ENCODE measurements at regions of chr5 and their contacts with region 1.

Region 1: GRCh38 chr5:56838409-56839039 is 23.2 kb downstream of the MAP3K1 start:
- DNase-seq: peak in 2 of 5 donors; percentile 44 to 54
- H3K4me3 ChIP-seq: no peak overlapping the region
- H3K4me3 Mint-ChIP-seq: peak overlapping the region in 6 of 7 donors; percentile 8 to 46 (median 29)
- H3K27ac ChIP-seq: no peak overlapping the region
- H3K27ac Mint-ChIP-seq: peak overlapping the region; percentile 37 to 90 (median 73)
- H3K4me1 ChIP-seq: peaks cover 76% of the 10 kb centered on the region
- H3K4me1 Mint-ChIP-seq: peaks cover 76 to 92% (median 91%) of the 10 kb centered on the region in 3 donors
- H3K27me3 ChIP-seq: no peaks in the 10 kb centered on the region
- H3K27me3 Mint-ChIP-seq: no peaks in the 10 kb centered on the region

Region 2: GRCh38 chr5:55936100-55936693 is 902.3 kb before region 1 on chr5:
- CTCF ChIA-PET with region 1: interaction called, 25 read pairs
- POLR2A ChIA-PET with region 1: no interaction called
- DNase-seq: peak; percentile 59 to 82 (median 64)
- H3K4me3 ChIP-seq: no peak overlapping the region
- H3K4me3 Mint-ChIP-seq: no peak overlapping the region
- H3K27ac ChIP-seq: no peak overlapping the region
- H3K27ac Mint-ChIP-seq: peak overlapping the region in 1 of 8 donors; percentile 27
- H3K4me1 ChIP-seq: no peaks in the 10 kb centered on the region
- H3K4me1 Mint-ChIP-seq: no peaks in the 10 kb centered on the region
- H3K27me3 ChIP-seq: no peaks in the 10 kb centered on the region
- H3K27me3 Mint-ChIP-seq: peaks cover 0 to 2% of the 10 kb centered on the region in 2 donors

Region 3: GRCh38 chr5:56264417-56265025 is 574.0 kb before region 1 on chr5:
- CTCF ChIA-PET with region 1: interaction called, 15 read pairs
- POLR2A ChIA-PET with region 1: no interaction called
- DNase-seq: peak in 1 of 5 donors; percentile 17
- H3K4me3 ChIP-seq: no peak overlapping the region
- H3K4me3 Mint-ChIP-seq: no peak overlapping the region
- H3K27ac ChIP-seq: no peak overlapping the region
- H3K27ac Mint-ChIP-seq: no peak overlapping the region
- H3K4me1 ChIP-seq: no peaks in the 10 kb centered on the region
- H3K4me1 Mint-ChIP-seq: peaks cover 0 to 2% (median 0%) of the 10 kb centered on the region in 3 donors
- H3K27me3 ChIP-seq: no peaks in the 10 kb centered on the region
- H3K27me3 Mint-ChIP-seq: peaks cover 3 to 8% of the 10 kb centered on the region in 2 donors

Region 4: GRCh38 chr5:56270568-56271392 is 567.7 kb before region 1 on chr5:
- CTCF ChIA-PET with region 1: interaction called, 23 read pairs
- POLR2A ChIA-PET with region 1: no interaction called
- DNase-seq: peak; percentile 39 to 65 (median 56)
- H3K4me3 ChIP-seq: no peak overlapping the region
- H3K4me3 Mint-ChIP-seq: peak overlapping the region in 4 of 7 donors; percentile 14 to 70 (median 16)
- H3K27ac ChIP-seq: no peak overlapping the region
- H3K27ac Mint-ChIP-seq: peak overlapping the region in 3 of 8 donors; percentile 32 to 64 (median 35)
- H3K4me1 ChIP-seq: peaks cover 8% of the 10 kb centered on the region
- H3K4me1 Mint-ChIP-seq: peaks cover 8 to 15% (median 9%) of the 10 kb centered on the region in 3 donors
- H3K27me3 ChIP-seq: no peaks in the 10 kb centered on the region
- H3K27me3 Mint-ChIP-seq: peaks cover 0 to 10% of the 10 kb centered on the region in 2 donors

Region 5: DNA sequence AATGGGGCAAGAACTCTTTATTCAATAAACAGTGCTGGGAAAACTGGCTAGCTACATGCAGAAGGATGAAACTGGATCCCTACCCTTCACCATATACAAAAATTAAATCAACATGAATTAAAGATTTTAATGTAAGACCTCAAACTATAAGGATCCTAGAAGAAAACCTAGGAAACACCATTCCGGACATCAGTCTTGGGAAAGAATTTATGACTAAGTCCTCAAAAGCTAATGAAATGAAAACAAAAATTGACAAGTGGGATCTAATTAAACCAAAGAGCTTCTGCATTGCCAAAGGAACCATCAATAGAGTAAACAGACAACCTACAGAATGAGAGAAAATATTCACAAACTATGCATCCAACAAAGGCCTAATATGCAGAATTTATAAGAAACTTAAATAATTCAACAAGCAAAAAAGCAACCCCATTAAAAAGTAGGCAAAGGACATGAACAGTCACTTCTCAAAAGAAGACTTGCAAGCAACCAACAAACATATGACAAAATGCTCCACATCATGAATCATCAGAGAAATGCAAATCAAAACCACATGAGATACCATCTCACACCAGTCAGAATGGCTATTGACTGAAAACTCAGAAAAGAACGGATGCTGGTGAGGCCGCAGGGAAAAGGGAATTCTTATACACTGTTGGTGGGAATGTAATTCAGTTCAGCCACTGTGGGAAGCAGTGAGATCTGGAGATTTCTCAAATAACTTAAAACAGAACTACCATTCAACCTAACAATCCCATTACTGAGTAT is 127.5 kb before region 1 on chr5:
- CTCF ChIA-PET with region 1: no interaction called
- POLR2A ChIA-PET with region 1: no interaction called
- DNase-seq: no peak
- H3K4me3 ChIP-seq: no peak overlapping the region
- H3K4me3 Mint-ChIP-seq: no peak overlapping the region
- H3K27ac ChIP-seq: no peak overlapping the region
- H3K27ac Mint-ChIP-seq: peak overlapping the region in 1 of 8 donors; percentile 27
- H3K4me1 ChIP-seq: no peaks in the 10 kb centered on the region
- H3K4me1 Mint-ChIP-seq: peaks cover 4 to 14% (median 5%) of the 10 kb centered on the region in 3 donors
- H3K27me3 ChIP-seq: no peaks in the 10 kb centered on the region
- H3K27me3 Mint-ChIP-seq: peaks cover 0 to 17% of the 10 kb centered on the region in 2 donors

Region 6: GRCh38 chr5:56852228-56853000 is 13.9 kb after region 1 on chr5:
- CTCF ChIA-PET with region 1: interaction called, 7 read pairs
- POLR2A ChIA-PET with region 1: interaction called, 10 read pairs
- DNase-seq: no peak
- H3K4me3 ChIP-seq: peak overlapping the region; percentile 3
- H3K4me3 Mint-ChIP-seq: peak overlapping the region; percentile 8 to 86 (median 65)
- H3K27ac ChIP-seq: no peak overlapping the region
- H3K27ac Mint-ChIP-seq: peak overlapping the region; percentile 8 to 83 (median 68)
- H3K4me1 ChIP-seq: peaks cover 80% of the 10 kb centered on the region
- H3K4me1 Mint-ChIP-seq: peaks cover 78 to 95% (median 92%) of the 10 kb centered on the region in 3 donors
- H3K27me3 ChIP-seq: no peaks in the 10 kb centered on the region
- H3K27me3 Mint-ChIP-seq: no peaks in the 10 kb centered on the region